ENCODE measurements at regions of chr6 and their contacts with region 1.

Region 1: GRCh38 chr6:111750753-111751684 is 122.2 kb downstream of the FYN start:
- DNase-seq: peak; percentile 35 to 93 (median 52)
- ATAC-seq: peak; percentile 78
- H3K4me3 ChIP-seq: peak overlapping the region; percentile 14
- H3K4me3 Mint-ChIP-seq: peak overlapping the region; percentile 65
- H3K27ac ChIP-seq: peak overlapping the region; percentile 77 to 93
- H3K27ac Mint-ChIP-seq: peak overlapping the region; percentile 99
- H3K4me1 ChIP-seq: peaks cover 69% of the 10 kb centered on the region
- H3K4me1 Mint-ChIP-seq: peaks cover 98% of the 10 kb centered on the region
- H3K27me3 ChIP-seq: no peaks in the 10 kb centered on the region
- H3K27me3 Mint-ChIP-seq: no peaks in the 10 kb centered on the region
- CTCF ChIP-seq: no peak

Region 2: DNA sequence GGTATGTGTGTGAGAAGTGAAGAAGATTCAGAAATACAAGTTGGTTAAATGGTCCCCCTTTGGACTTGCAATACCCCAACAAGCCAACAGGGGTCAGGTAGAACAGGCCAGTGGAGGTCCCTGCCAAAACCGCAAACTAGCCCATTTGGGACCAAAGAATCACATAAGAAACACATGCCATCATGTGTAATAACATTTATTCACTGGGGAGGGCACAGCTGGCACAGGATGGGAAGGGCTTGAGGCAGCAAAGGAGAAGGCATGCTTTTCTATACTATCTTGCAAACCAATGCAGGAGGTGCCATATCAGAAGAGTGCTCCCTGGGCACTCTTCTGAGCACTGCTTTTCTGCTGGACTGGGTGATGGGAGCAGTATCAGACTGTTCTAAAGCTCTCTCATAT is 29.3 kb before region 1 on chr6:
- CTCF ChIA-PET with region 1: no interaction called
- POLR2A ChIA-PET with region 1: interaction called, 12 read pairs
- intact Hi-C with region 1: loop called in 1 of 2 experiments (anchors 2 kb)
- DNase-seq: peak in 11 of 14 experiments; percentile 15 to 75 (median 33)
- ATAC-seq: peak; percentile 35
- H3K4me3 ChIP-seq: no peak overlapping the region
- H3K4me3 Mint-ChIP-seq: no peak overlapping the region
- H3K27ac ChIP-seq: no peak overlapping the region
- H3K27ac Mint-ChIP-seq: peak overlapping the region; percentile 93
- H3K4me1 ChIP-seq: peaks cover 67% of the 10 kb centered on the region
- H3K4me1 Mint-ChIP-seq: peaks cover 83% of the 10 kb centered on the region
- H3K27me3 ChIP-seq: no peaks in the 10 kb centered on the region
- H3K27me3 Mint-ChIP-seq: no peaks in the 10 kb centered on the region
- CTCF ChIP-seq: peak; percentile 60

Region 3: GRCh38 chr6:111734068-111735061 is 16.7 kb before region 1 on chr6:
- CTCF ChIA-PET with region 1: no interaction called
- POLR2A ChIA-PET with region 1: interaction called, 5 read pairs
- intact Hi-C with region 1: loop called in 1 of 2 experiments (anchors 2 kb)
- DNase-seq: peak in 2 of 14 experiments; percentile 59 to 65
- ATAC-seq: peak; percentile 53
- H3K4me3 ChIP-seq: no peak overlapping the region
- H3K4me3 Mint-ChIP-seq: peak overlapping the region; percentile 62
- H3K27ac ChIP-seq: peak overlapping the region; percentile 18 to 63
- H3K27ac Mint-ChIP-seq: peak overlapping the region; percentile 93
- H3K4me1 ChIP-seq: peaks cover 89% of the 10 kb centered on the region
- H3K4me1 Mint-ChIP-seq: peaks cover 93% of the 10 kb centered on the region
- H3K27me3 ChIP-seq: no peaks in the 10 kb centered on the region
- H3K27me3 Mint-ChIP-seq: no peaks in the 10 kb centered on the region
- CTCF ChIP-seq: no peak